ENCODE measurements at regions of chr2 and their contacts with region 1.

Region 1: GRCh38 chr2:35410431-35411061 is 945.0 kb upstream of the CRIM1 start:
- DNase-seq: peak; percentile 55
- H3K4me3 ChIP-seq: no peak overlapping the region
- H3K27ac ChIP-seq: no peak overlapping the region
- H3K4me1 ChIP-seq: no peaks in the 10 kb centered on the region
- H3K27me3 ChIP-seq: no peaks in the 10 kb centered on the region
- CTCF ChIP-seq: peak; percentile 86 to 93
- POLR2A ChIP-seq: no peak

Region 2: DNA sequence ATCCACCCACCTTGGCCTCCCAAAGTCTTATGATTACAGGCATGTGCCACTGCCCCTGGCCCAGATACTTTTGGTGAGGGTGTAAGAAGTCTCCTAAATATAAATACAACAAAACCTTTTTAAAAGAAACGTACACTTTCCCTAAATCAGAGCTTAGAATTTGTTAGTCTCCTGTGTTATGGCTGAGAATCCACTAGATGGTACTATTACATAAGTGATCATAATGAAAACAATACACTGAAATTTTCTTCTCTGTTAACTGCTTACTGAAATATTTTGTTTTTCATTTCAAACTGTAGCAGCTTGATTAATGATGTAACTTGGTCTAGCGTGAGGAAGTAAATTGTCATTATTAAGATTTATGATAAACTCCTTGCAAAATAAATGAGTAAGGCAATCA is 1736.6 kb before region 1 on chr2:
- CTCF ChIA-PET with region 1: interaction called, 41 read pairs
- POLR2A ChIA-PET with region 1: no interaction called
- dilution Hi-C with region 1: no loop called
- intact Hi-C with region 1: loop called (anchors 1 kb)
- DNase-seq: peak; percentile 32
- H3K4me3 ChIP-seq: no peak overlapping the region
- H3K27ac ChIP-seq: no peak overlapping the region
- H3K4me1 ChIP-seq: no peaks in the 10 kb centered on the region
- H3K27me3 ChIP-seq: no peaks in the 10 kb centered on the region
- CTCF ChIP-seq: peak; percentile 8 to 18
- POLR2A ChIP-seq: no peak

Region 3: GRCh38 chr2:34012715-34013302 is 1397.7 kb before region 1 on chr2:
- CTCF ChIA-PET with region 1: interaction called, 9 read pairs
- POLR2A ChIA-PET with region 1: no interaction called
- dilution Hi-C with region 1: no loop called
- intact Hi-C with region 1: loop called (anchors 1 kb)
- DNase-seq: peak; percentile 41
- H3K4me3 ChIP-seq: no peak overlapping the region
- H3K27ac ChIP-seq: no peak overlapping the region
- H3K4me1 ChIP-seq: no peaks in the 10 kb centered on the region
- H3K27me3 ChIP-seq: no peaks in the 10 kb centered on the region
- CTCF ChIP-seq: peak; percentile 62 to 66
- POLR2A ChIP-seq: no peak

Region 4: DNA sequence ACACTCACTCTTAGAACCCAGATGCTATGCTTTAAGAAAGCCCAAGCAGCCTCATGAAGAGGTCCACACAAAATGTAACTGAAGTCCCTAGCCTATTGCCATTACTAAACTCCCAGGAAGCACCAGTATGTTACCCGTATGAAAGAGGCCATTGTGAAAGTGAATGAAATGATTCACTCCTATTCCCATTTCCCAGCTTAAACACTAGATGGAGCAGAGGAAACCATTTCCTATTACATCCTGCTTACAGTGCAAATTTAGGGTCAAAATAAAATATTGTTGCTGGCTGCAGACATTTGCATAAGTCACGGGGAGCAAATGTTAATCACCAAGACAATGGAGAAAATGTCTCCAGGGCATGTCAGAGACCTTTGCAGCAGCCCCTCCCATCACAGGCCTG is 44.7 kb before region 1 on chr2:
- CTCF ChIA-PET with region 1: no interaction called
- POLR2A ChIA-PET with region 1: no interaction called
- dilution Hi-C with region 1: no loop called
- intact Hi-C with region 1: loop called (anchors 2 kb)
- DNase-seq: no peak
- H3K4me3 ChIP-seq: no peak overlapping the region
- H3K27ac ChIP-seq: no peak overlapping the region
- H3K4me1 ChIP-seq: no peaks in the 10 kb centered on the region
- H3K27me3 ChIP-seq: no peaks in the 10 kb centered on the region
- CTCF ChIP-seq: no peak
- POLR2A ChIP-seq: no peak